ENCODE measurements at regions of chr1 and their contacts with region 1.

Region 1: DNA sequence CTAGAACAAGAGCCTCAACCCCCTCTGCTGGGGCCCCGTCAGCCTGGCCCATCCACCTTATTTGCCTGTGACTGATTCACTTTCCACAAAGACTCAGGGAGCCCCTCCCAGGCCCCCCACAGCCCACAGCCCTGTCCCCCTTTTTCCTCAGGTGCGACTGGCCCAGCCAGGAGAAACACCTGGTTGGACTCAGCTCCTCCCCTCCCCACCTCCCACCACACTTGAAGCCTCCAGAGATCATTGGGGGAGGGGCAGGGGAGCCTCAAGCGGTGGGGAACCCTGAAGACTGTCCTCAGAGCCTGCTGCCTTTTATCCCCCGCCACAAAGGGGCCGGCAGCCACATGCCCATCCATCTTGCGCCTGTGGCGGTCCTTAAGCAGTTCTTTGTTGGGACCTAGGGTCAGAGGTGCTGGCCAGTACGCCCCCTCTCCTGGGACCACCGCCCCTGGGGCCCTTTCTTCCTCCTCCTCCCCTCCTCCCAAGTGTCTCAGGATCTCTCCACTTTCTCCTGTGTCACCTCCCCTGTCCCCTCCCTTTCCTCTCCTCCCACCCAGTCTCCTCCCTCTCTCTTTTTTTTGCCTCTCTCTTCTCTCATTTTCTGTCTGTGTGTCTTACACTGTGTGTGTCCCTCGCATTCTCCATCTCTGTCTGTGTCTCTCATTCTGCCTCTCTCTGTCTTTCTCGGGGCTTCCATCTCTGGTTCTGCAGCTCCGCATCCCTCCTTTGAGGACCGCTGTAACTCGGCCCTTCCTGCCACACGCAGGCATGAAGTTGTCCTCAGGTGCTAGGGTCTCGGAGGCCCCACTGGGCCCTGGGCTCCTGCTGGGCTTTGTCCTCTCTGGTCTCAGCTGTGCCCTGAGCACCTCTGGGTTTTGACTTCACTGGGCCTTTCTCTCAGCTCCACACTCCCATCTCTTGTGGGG is 12.2 kb downstream of the CRABP2 start:
- DNase-seq: no peak

Region 2: DNA sequence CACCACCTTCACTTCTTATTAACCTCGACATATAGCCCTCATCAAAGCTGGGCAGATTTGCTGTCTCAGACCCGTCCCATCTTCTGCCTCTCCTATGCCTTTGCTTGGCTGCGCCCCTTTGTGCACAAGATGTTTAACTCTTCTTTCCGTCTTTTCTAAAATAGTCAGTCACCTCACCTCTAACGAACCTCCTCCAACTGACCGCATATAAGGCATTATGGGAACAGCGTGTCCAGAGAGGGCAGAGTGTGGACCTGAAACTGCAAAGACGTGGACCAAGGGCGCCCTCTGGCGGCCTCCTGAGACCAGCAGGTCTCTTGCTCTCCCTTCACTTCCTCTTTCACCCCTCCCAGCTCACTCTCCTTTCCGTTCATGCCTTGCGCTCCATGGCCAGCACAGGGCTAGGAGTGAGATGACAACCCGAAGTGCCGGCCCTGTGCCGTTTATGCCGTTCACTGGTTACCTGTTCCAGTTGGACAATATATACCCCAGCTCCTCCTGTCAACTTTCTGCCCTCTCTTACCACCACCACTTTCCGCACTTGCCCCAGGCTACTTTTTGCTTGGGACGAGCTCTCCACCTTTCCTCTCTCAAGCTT is 32.6 kb after region 1 on chr1:
- intact Hi-C with region 1: loop called (anchors 2 kb)
- DNase-seq: peak; percentile 96

Region 3: GRCh38 chr1:156889802-156890585 is 196.8 kb after region 1 on chr1:
- intact Hi-C with region 1: loop called in 1 of 2 experiments (anchors 10 kb)
- DNase-seq: peak; percentile 93

Region 4: GRCh38 chr1:156936721-156937220 is 243.6 kb after region 1 on chr1:
- intact Hi-C with region 1: no loop called
- DNase-seq: peak; percentile 49